Right ventricle myocardium superior (tissue), 1 donor: ENCODE measurements at regions of chr7 and their contacts with region 1.

Region 1: DNA sequence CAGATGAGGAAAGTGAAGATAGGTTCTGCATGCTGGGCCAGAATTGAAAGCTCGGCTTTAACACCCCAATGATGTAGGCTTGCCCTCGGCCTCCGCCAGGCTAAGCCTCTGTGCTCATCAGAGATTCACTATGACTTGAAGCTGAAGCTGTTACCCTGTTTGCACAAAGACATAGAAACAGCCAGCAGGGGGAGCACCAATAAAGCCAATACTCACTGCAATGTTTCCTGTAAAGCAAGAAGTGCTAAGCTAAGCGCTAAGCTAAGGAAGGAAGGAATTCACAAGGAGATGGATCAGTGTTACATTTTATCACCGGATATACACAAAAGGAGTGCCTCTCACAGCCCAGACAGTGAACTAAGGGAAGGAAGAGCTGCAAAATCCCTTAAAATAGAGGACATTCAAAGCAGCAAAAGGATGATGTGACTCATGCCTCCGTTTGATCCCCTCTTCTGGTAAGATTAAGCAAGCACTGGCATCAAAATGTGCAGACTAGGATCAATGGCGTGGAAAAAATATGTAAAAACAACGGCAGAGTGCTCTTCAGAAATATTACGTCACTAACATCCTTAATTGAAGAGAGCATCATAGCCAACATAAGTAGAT is 153.8 kb downstream of the COBL start:
- DNase-seq: peak; percentile 43
- ATAC-seq: peak; percentile 89

Region 2: GRCh38 chr7:50206453-50207250 is 956.2 kb before region 1 on chr7:
- intact Hi-C with region 1: loop called (anchors 5 kb)
- DNase-seq: no peak
- ATAC-seq: peak; percentile 28

Region 3: GRCh38 chr7:50467817-50468610 is 694.8 kb before region 1 on chr7:
- intact Hi-C with region 1: loop called (anchors 5 kb)
- DNase-seq: peak; percentile 88
- ATAC-seq: peak; percentile 97

Region 4: GRCh38 chr7:51366930-51367613 is 204.2 kb after region 1 on chr7:
- intact Hi-C with region 1: loop called (anchors 5 kb)
- DNase-seq: no peak
- ATAC-seq: peak; percentile 93

Region 5: DNA sequence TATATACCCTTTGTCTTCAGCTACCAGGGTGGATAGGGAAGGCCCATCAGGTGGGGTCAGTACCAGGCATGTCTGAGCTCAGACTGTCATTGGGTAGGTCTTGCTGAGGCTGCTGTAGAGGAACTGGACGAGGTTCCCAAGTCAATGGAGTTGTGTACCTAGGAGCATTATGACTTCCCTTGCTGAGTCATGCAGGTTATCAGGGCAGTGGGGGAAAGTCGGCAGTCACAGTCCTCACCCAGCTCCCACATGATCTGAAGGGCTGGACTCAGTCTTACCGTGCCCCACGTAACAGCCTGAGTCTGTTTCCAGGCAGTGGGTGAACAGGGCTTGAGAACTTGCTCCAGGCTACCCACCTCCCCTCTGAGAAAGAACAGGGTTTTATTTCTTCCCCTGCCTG is 414.6 kb after region 1 on chr7:
- intact Hi-C with region 1: no loop called
- DNase-seq: no peak
- ATAC-seq: no peak